Activated CD8-positive, alpha-beta T cell treated with anti-CD3 and anti-CD28 coated beads, Interleukin-2, amount 10 ng/mL, durations not matched to agents 7 days and 5 days (primary cell): ENCODE measurements at regions of chr17 and their contacts with region 1.

Region 1: GRCh38 chr17:19766422-19767270 is 18.5 kb upstream of the ALDH3A1 start:
- DNase-seq: peak; percentile 76
- ATAC-seq: peak; percentile 96
- H3K4me3 Mint-ChIP-seq: no peak overlapping the region
- H3K27ac Mint-ChIP-seq: no peak overlapping the region
- H3K4me1 Mint-ChIP-seq: peaks cover 8% of the 10 kb centered on the region
- H3K27me3 Mint-ChIP-seq: no peaks in the 10 kb centered on the region

Region 2: DNA sequence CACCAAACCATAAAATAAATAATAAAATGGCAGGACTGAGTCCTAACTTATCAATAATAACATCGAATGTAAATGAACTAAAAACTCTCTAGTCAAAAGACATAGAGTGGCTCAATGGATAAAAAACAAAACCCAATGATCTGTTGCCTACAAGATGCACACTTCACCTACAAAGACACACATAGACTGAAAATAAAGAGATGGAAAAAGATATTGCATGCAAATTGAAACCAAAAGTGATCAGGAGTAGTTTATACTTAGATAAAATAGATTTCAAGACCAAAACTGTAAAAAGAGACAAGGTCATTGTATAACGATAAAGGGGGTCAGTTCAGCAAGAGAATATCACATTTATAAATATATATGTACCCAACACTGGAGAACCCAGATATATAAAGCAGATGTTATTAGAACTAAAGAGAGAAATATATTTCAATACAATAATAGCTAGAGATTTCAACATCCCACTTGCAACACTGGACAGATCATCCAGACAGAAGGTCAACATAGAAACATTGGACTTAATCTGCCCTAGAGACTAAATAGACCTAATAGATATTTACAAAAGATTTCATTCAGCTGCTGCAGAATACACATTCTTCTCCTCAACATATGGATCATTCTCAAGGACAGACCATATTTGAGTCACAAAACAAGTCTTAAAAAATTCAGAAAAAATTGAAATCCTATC is 80.1 kb before region 1 on chr17:
- CTCF ChIA-PET with region 1: no interaction called
- POLR2A ChIA-PET with region 1: no interaction called
- DNase-seq: no peak
- ATAC-seq: no peak
- H3K4me3 Mint-ChIP-seq: no peak overlapping the region
- H3K27ac Mint-ChIP-seq: no peak overlapping the region
- H3K4me1 Mint-ChIP-seq: no peaks in the 10 kb centered on the region
- H3K27me3 Mint-ChIP-seq: no peaks in the 10 kb centered on the region

Region 3: DNA sequence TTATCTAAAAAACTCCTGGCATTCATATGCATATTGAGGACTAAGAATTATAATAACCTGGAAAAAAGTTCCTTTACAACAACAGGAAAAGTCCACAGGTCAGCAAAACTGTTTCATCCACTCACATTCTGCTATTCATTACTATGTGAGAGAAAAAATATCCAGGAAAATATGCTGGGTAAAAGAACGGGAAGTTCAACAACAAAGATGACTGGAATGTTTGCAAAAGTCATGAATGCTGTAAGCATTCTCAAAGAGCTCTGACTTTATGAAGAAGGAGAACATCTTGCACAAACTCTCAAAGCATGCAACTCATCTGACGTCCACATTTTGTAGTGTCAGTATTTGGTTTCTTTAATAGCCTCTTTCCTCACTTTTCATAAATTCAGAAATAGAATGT is 38.4 kb after region 1 on chr17:
- CTCF ChIA-PET with region 1: interaction called, 11 read pairs
- POLR2A ChIA-PET with region 1: no interaction called
- DNase-seq: no peak
- ATAC-seq: no peak
- H3K4me3 Mint-ChIP-seq: no peak overlapping the region
- H3K27ac Mint-ChIP-seq: no peak overlapping the region
- H3K4me1 Mint-ChIP-seq: peaks cover 7% of the 10 kb centered on the region
- H3K27me3 Mint-ChIP-seq: no peaks in the 10 kb centered on the region

Region 4: GRCh38 chr17:19897901-19898300 is 131.3 kb after region 1 on chr17:
- CTCF ChIA-PET with region 1: no interaction called
- POLR2A ChIA-PET with region 1: no interaction called
- DNase-seq: no peak
- ATAC-seq: no peak
- H3K4me3 Mint-ChIP-seq: no peak overlapping the region
- H3K27ac Mint-ChIP-seq: no peak overlapping the region
- H3K4me1 Mint-ChIP-seq: no peaks in the 10 kb centered on the region
- H3K27me3 Mint-ChIP-seq: no peaks in the 10 kb centered on the region